Right cardiac atrium (tissue), 5 donors: ENCODE measurements at regions of chr6 and their contacts with region 1.

Region 1: DNA sequence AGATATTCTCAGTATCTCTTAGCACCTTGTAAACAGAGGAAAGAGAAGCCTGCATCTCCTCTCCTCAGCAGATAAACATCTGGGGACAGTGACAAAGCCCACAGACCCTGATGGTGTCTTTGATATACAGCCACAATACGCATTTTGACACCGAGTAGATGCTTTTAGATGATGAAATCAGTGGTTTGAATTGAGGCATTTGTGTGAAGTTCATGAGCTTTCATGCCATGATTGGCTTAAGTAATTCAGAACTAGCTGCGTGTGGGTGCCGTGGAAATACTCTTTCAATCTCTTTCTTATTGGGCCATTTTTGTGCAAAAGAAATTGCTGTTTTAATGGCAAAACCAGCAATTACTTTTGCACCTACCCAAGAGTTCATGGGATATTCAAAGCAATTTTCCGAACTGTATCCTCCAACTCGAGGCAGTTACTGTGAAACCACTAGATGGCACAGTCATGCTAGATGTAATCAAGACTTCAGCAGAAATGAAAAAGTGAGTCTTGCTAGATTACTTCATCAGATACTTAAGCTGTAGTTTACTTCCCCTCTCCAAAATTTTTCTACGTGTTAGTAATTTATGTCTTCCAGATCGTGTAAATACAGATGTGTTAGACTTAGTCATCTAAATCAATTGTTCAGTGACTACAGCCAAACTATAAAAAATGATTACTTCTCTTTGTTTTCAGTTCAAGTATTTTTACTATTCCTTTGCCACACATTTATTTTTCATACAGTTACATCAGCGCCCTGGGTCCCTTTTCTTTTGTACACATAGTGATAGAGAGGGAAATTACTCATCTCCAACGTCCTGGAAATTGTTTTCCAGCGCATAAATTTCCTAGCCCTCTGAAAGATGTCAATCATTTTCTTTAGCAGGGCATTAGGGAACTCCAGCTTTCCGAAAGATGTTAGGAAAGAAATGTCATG is 49.4 kb downstream of the IYD start:
- DNase-seq: no peak
- ATAC-seq: peak; percentile 81 to 89
- H3K4me3 ChIP-seq: peak overlapping the region; percentile 79
- H3K27ac ChIP-seq: no peak overlapping the region
- H3K4me1 ChIP-seq: peaks cover 3% of the 10 kb centered on the region
- H3K27me3 ChIP-seq: no peaks in the 10 kb centered on the region

Region 2: GRCh38 chr6:150046943-150047342 is 371.2 kb before region 1 on chr6:
- intact Hi-C with region 1: no loop called
- DNase-seq: no peak
- ATAC-seq: no peak
- H3K4me3 ChIP-seq: no peak overlapping the region
- H3K27ac ChIP-seq: no peak overlapping the region
- H3K4me1 ChIP-seq: no peaks in the 10 kb centered on the region
- H3K27me3 ChIP-seq: no peaks in the 10 kb centered on the region

Region 3: DNA sequence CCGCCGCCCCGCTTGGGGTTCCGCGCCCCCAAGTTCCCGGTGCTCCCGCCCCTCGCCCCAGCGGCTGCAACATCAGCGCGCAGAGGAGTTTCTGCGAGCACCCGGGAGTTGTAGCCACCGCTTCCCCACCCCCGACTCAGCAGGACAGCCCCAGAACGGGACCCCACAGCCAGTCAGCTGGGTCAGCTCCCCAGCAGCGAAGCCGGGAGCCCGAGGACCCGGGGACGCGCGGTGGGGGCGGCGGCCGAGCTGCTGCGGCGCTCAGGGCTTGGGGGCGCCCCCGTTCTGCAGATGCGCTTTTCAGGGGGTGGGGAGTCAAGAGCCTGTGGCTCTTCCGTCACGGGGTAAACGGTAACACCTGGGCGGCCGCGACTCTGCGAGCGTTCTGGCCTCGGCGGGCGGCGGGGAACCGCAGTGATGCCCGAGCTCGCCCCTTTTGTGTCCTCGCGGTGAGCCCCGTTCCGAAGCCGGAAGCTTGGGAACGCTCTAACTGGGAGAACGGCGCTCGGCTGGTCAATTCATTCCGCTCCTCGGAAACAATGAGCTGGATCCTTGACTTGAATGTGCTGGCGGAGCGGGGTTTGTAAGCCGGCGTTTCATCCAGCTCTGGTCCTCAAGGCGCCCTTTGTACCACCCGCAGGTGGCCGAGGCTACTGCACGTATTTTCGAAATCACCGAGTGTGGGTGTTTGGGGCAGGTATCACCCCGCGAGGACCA is 182.3 kb after region 1 on chr6:
- intact Hi-C with region 1: loop called in 2 of 4 experiments (anchors 2 to 10 kb)
- DNase-seq: peak; percentile 75 to 83 (median 77)
- ATAC-seq: peak; percentile 69 to 86
- H3K4me3 ChIP-seq: peak overlapping the region; percentile 72
- H3K27ac ChIP-seq: peak overlapping the region; percentile 32
- H3K4me1 ChIP-seq: no peaks in the 10 kb centered on the region
- H3K27me3 ChIP-seq: no peaks in the 10 kb centered on the region

Region 4: DNA sequence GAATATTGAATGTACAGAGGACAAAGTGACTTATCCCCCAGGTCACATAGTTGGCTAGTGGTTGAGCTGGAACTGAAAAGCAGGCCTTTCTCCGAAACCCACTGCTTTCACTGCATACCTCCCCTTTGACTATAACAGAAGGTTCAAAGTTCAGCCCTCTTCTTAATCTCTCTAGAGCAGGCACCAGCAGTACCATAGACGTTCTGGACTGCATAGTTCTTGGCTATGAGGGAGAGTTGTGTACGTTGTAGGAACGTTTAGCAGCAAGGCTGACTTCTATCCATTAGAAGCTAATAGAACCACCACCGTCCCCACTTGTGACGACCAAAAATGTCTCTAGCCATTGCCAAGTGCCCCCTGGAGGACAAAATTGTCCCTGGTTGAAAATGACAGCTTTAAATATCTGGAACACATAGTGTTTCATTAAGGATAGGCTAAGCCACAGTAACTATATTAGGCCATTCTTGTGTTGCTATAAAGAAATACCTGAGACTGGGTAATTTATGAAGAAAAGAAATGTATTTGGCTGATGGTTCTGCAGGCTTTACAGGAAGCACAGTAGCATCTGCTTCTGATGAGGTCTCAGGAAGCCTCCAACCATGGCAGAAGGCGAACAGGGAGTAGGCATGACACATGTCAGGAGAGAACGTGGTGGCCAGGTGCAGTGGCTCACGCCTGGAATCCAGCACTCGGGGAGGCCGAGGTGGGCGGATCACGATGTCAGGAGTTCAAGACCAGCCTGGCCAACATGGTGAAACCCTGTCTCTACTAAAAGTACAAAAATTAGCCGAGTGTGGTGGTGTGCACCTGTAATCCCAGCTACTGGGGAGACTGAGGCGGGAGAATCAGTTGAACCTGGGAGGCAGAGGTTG is 323.7 kb after region 1 on chr6:
- intact Hi-C with region 1: loop called in 1 of 4 experiments (anchors 10 kb)
- DNase-seq: peak in 1 of 3 donors; percentile 19
- ATAC-seq: peak in 1 of 2 donors; percentile 44
- H3K4me3 ChIP-seq: no peak overlapping the region
- H3K27ac ChIP-seq: no peak overlapping the region
- H3K4me1 ChIP-seq: no peaks in the 10 kb centered on the region
- H3K27me3 ChIP-seq: no peaks in the 10 kb centered on the region

Region 5: GRCh38 chr6:150813319-150813992 is 395.3 kb after region 1 on chr6:
- intact Hi-C with region 1: loop called (anchors 2 to 5 kb)
- DNase-seq: no peak
- ATAC-seq: peak in 1 of 2 donors; percentile 68
- H3K4me3 ChIP-seq: no peak overlapping the region
- H3K27ac ChIP-seq: no peak overlapping the region
- H3K4me1 ChIP-seq: no peaks in the 10 kb centered on the region
- H3K27me3 ChIP-seq: no peaks in the 10 kb centered on the region